ENCODE measurements at regions of chr7 and their contacts with region 1.

Region 1: DNA sequence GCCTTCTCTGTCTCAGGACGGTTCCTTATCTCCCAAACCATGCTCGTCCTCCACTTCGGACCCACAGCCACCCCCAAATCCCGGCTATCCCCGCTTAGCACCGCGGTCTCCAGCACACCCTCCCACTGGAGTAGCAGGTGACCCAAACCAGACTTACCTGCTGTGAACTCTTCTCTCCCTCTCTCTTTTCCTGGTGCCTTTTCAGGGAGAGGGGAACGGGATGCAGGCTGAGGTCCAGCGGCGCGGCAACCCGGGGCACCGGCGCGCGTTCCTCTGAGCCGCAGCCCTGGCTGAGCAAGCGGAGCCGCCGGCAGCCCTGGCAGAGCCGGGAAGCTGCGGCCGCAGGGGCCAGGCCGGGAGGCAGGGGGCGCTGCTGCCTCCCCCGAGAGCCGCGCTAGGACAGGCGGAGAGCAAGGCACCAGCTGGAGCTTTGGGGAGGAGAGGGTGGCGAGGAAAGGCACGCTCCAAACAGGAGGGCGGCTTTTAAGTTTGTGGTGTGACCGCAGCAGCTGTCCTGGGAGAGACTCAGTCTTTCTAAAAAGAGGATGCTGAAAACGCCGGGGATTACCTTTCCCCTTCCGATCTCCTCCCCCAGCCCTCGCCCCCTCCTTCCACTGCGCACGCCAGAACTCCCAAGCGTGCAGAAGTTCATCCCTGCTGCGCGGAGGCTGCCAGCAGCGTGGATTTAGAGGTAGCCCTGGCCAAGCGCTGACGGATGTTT is at the start of gene SEMA3D:
- DNase-seq: peak; percentile 58 to 96 (median 74)

Region 2: DNA sequence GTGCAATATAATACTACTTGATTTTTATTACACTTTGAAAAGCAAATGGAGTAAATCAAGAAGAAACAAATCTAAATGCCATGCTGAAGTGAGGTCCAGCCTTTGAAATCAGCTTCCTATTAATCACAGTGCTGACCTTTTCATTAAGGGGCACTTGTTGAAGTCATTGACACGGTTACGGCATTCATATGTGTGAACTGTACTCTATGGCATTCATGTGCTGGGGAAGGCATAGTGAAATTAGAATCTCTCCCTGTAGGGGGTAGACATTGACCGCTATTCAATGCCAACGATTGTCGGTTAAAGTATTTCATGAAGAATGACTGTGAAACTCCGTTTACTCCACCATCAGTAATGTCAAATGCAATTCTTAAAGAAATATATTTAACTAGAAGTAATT is 696.0 kb before region 1 on chr7:
- intact Hi-C with region 1: no loop called
- DNase-seq: no peak

Region 3: GRCh38 chr7:85041605-85042216 is 145.0 kb before region 1 on chr7:
- intact Hi-C with region 1: loop called (anchors 5 kb)
- DNase-seq: peak in 9 of 10 donors; percentile 13 to 92 (median 68)

Region 4: DNA sequence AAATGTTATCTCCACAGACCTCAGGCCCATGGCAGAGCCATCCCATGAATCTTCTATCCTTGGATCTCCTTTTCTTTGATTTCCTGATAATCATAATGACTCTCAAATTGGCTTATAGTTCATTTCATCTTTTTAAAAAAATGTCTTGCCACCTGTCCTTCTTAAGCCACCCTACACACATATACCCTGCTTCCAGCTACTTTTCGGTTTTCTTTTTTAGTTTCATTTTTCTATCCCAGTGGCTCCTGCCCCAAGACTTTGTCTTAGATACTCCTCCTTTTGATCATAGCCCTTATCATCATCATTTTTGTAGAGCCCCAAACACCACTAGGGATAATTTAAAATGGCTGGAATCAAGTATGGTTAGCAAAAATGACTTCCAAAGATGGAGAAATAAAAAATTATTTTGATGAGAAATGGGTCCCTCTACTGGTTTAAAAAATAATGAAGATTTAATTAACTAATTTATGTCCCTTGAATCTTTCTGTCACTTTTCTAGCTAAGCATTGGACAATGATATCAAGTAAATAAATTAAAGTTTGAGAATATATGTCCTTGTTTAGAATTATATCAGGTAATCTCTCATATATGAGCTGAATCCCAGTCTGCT is 277.5 kb after region 1 on chr7:
- intact Hi-C with region 1: loop called (anchors 10 kb)
- DNase-seq: no peak

Region 5: GRCh38 chr7:85554236-85555178 is 367.8 kb after region 1 on chr7:
- intact Hi-C with region 1: loop called (anchors 2 kb)
- DNase-seq: no peak